Activated naive CD4-positive, alpha-beta T cell treated with anti-CD3 and anti-CD28 coated beads for 36 hours (primary cell): ENCODE measurements at regions of chr6 and their contacts with region 1.

Region 1: GRCh38 chr6:42166444-42167141 is 6.6 kb upstream of the GUCA1A start:
- DNase-seq: peak; percentile 91
- H3K4me3 Mint-ChIP-seq: no peak overlapping the region
- H3K27ac Mint-ChIP-seq: no peak overlapping the region
- H3K4me1 Mint-ChIP-seq: no peaks in the 10 kb centered on the region
- H3K27me3 Mint-ChIP-seq: no peaks in the 10 kb centered on the region

Region 2: DNA sequence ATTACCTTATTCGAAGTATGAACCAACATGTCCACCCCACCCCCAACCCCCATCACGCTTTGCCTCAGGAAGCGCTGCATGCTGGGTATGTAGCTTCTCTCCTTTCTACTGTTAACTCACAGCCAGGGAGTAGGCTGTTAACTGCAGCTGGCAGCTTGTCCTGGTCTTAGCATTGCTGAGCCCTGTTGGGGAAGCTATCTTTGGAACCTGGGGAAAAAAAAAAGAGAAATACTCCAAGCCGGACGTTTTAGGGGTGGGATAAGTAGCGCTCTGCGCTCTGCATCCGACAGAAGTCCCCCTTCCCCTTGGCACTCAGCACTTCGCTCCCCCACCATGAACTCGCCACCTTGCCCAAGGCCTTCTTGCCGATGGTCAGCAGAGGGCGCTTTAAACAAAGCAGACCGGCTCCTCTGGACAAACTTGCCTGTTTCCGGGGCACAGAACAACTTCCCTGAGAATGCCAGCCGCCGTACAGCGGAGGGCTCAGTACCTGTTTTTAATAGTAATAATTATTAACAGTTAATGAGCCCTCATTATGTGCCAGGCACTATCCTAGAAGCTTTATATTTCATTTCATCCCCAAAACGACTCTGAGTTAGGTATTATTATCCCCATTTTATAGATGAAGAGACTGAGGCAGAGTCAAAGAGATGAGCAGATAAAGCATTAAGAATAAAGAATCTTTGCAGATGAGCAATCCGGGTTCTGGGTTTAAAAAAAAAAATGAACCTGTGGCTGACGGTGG is 563.6 kb before region 1 on chr6:
- CTCF ChIA-PET with region 1: no interaction called
- intact Hi-C with region 1: loop called (anchors 1 kb)
- DNase-seq: peak; percentile 90
- H3K4me3 Mint-ChIP-seq: no peak overlapping the region
- H3K27ac Mint-ChIP-seq: no peak overlapping the region
- H3K4me1 Mint-ChIP-seq: peaks cover 4% of the 10 kb centered on the region
- H3K27me3 Mint-ChIP-seq: no peaks in the 10 kb centered on the region

Region 3: GRCh38 chr6:41779793-41780545 is 386.6 kb before region 1 on chr6 and contains the start of gene FRS3:
- CTCF ChIA-PET with region 1: no interaction called
- intact Hi-C with region 1: loop called (anchors 1 kb)
- DNase-seq: peak; percentile 99
- H3K4me3 Mint-ChIP-seq: peak within 1 kb of the TSS; percentile 82
- H3K27ac Mint-ChIP-seq: no peak within 1 kb of the TSS
- H3K4me1 Mint-ChIP-seq: peaks cover 11% of the 10 kb centered on the region
- H3K27me3 Mint-ChIP-seq: peaks cover 4% of the 10 kb centered on the region
- total RNA-seq, gene FRS3: 4.0 to 4.2 TPM

Region 4: GRCh38 chr6:41801380-41801779 is 365.2 kb before region 1 on chr6:
- CTCF ChIA-PET with region 1: interaction called, 3 read pairs
- intact Hi-C with region 1: loop called (anchors 1 kb)
- DNase-seq: no peak
- H3K4me3 Mint-ChIP-seq: no peak overlapping the region
- H3K27ac Mint-ChIP-seq: no peak overlapping the region
- H3K4me1 Mint-ChIP-seq: no peaks in the 10 kb centered on the region
- H3K27me3 Mint-ChIP-seq: no peaks in the 10 kb centered on the region

Region 5: DNA sequence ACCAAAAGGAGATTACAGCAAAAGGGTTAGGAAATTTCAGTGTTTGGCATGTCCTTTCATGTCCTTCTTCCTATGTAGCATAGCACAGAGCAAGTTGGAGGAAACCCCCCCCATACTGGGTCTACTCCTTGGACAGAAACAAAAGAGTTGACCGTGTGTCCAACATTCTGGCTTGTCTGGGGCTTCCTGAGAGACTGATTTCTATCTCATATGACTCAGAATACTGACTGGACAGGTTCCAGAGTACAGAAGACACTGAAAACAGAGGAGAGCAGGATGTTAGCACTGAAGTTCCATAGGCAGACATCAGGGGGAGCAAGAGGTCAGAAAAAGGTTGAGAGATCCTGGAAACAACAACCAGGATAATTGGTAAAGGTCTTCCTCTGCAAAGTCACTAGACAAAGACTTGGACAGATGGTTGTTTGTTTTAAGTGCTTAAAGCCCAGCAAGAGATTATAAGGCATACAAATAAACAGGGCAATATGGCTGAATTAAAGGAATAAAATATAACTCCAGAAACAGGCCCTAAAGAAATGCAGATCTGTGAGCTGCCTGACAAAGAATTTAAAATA is 319.8 kb before region 1 on chr6:
- CTCF ChIA-PET with region 1: interaction called, 22 read pairs
- intact Hi-C with region 1: loop called (anchors 1 kb)
- DNase-seq: peak; percentile 81
- H3K4me3 Mint-ChIP-seq: no peak overlapping the region
- H3K27ac Mint-ChIP-seq: no peak overlapping the region
- H3K4me1 Mint-ChIP-seq: peaks cover 5% of the 10 kb centered on the region
- H3K27me3 Mint-ChIP-seq: no peaks in the 10 kb centered on the region

Region 6: GRCh38 chr6:42075159-42075838 is 91.3 kb before region 1 on chr6:
- CTCF ChIA-PET with region 1: interaction called, 3 read pairs
- intact Hi-C with region 1: loop called (anchors 1 kb)
- DNase-seq: peak; percentile 78
- H3K4me3 Mint-ChIP-seq: no peak overlapping the region
- H3K27ac Mint-ChIP-seq: no peak overlapping the region
- H3K4me1 Mint-ChIP-seq: peaks cover 3% of the 10 kb centered on the region
- H3K27me3 Mint-ChIP-seq: no peaks in the 10 kb centered on the region

Region 7: GRCh38 chr6:42104095-42104806 is 62.3 kb before region 1 on chr6:
- CTCF ChIA-PET with region 1: interaction called, 17 read pairs
- intact Hi-C with region 1: loop called (anchors 1 kb)
- DNase-seq: peak; percentile 87
- H3K4me3 Mint-ChIP-seq: peak overlapping the region; percentile 65
- H3K27ac Mint-ChIP-seq: no peak overlapping the region
- H3K4me1 Mint-ChIP-seq: peaks cover 21% of the 10 kb centered on the region
- H3K27me3 Mint-ChIP-seq: no peaks in the 10 kb centered on the region